ENCODE measurements at regions of chr11 and their contacts with region 1.

Region 1: GRCh38 chr11:12288212-12288930 is 89.0 kb upstream of the PARVA start:
- DNase-seq: peak; percentile 87
- H3K4me3 ChIP-seq: no peak overlapping the region
- H3K27ac ChIP-seq: peak overlapping the region; percentile 97
- H3K4me1 ChIP-seq: peaks cover 44% of the 10 kb centered on the region
- H3K27me3 ChIP-seq: no peaks in the 10 kb centered on the region
- CTCF ChIP-seq: peak; percentile 96 to 97
- POLR2A ChIP-seq: no peak

Region 2: DNA sequence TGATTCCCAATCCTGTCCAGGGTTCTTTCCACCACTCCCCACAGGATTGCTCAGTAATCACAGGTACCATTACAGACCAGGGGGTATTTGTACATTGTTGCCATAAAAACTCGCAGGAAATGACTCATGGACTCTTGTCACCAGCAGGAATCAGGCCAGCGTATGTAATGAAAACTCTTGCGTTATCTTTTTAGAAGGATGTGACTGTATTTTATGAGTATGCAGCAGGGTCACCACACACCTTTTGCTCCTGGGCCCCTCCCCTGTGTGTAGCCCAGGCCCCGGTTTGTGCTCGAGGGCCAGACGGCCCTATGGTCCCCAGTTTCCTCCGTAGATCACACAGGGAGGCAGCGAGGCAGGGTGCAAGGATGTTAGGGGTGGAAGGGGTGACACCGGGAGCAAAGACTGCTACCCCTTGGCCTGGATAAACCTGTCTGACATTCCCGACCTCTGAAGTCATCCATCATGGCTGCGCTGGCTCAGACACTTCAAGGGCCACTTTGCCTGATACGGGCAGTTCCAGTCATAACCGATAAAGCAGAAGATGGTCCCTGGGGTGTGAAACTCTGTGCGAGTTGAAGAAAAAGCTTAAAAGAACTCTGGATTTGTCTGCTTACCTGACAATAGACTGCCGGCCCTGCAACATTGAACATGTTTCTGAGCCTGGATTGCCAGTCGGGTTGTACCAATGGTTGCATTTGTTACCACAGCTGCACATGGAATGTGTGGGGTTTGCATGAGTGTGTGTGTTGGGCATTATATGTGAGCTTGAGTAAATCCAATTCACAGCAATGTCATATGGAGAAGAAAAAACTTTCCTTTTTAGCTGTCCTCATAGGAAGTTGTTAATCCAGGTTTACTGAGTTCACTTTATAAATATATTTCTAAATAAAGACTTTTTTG is 121.0 kb before region 1 on chr11:
- CTCF ChIA-PET with region 1: interaction called, 3 read pairs
- POLR2A ChIA-PET with region 1: no interaction called
- dilution Hi-C with region 1: no loop called
- intact Hi-C with region 1: loop called (anchors 2 kb)
- DNase-seq: peak; percentile 92
- H3K4me3 ChIP-seq: no peak overlapping the region
- H3K27ac ChIP-seq: peak overlapping the region; percentile 95
- H3K4me1 ChIP-seq: peaks cover 59% of the 10 kb centered on the region
- H3K27me3 ChIP-seq: no peaks in the 10 kb centered on the region
- CTCF ChIP-seq: no peak
- POLR2A ChIP-seq: peak; percentile 78

Region 3: DNA sequence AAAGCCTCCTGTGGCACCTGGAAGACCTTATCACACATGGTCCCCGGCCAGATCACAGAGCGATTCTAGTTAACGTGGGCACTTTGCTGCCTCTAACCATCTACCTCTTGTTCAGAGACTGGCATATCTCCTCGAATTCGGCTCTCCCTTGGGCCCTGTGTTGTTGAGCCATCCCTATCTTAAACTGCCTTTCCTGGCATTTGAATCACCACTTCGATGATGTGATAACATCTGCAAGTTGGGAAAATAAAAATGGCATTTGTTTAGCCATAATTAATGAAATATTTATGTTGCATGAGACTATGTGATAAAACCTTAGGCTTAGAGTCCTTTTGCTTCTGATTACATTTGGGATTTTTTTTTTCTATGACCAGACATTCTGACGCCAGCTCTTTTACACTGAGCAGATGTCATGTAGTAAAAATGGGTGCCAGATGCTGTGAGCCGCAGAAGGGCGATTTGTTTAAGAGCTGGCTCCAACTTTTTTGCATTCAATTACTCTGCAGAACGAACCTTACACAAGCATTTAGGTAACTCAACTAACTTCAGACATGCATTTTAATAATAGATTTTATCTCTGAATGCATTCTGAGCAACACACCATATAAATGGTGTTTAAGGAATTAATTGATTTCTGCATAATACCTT is 30.5 kb after region 1 on chr11:
- CTCF ChIA-PET with region 1: interaction called, 11 read pairs
- POLR2A ChIA-PET with region 1: no interaction called
- dilution Hi-C with region 1: no loop called
- intact Hi-C with region 1: no loop called
- DNase-seq: no peak
- H3K4me3 ChIP-seq: no peak overlapping the region
- H3K27ac ChIP-seq: no peak overlapping the region
- H3K4me1 ChIP-seq: no peaks in the 10 kb centered on the region
- H3K27me3 ChIP-seq: no peaks in the 10 kb centered on the region
- CTCF ChIP-seq: no peak
- POLR2A ChIP-seq: no peak

Region 4: DNA sequence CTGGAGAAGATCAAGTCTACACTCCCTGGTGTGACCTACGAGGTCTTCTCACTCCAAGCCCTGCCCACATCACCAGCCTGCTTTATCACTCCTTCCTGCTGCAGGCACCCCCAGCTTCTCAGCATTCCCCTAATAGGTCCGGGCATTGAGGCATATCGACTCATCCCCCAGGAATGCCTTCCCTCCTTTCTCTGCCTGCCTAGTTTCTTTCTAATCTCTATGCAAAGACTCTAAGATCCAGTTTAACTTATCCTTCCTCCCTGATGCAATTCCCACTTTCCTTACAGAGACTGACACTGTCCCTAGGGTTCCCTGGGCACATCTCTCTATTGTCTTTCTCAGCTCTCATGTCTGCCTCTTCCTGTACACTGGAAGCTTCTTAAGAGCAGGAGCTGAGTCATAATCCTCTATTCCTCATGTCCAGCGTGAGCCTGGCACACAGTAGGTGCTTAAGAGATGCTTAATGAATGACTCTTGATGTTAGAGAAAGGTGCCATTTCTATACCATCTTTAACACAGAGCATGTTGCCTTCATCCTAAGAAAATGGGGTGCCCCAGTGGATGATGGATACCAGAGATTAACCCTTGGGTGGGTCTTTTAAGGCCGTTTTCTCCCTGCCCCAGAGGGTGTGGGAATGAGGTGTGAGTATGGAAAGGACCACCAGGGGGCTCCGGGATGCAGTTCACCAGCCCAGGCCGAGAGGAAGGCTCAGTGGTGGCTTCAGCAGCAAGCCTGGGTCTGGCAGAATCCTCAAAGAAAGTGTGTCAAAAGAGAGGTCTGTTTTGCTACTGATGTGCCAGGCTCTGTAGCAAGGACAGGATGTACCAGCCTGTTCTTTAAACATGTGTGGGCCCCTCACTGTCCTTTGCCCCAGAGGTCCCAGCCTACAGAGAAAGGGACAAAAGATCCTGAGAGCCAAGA is 123.7 kb after region 1 on chr11:
- CTCF ChIA-PET with region 1: interaction called, 11 read pairs
- POLR2A ChIA-PET with region 1: no interaction called
- dilution Hi-C with region 1: no loop called
- intact Hi-C with region 1: loop called (anchors 1 kb)
- DNase-seq: peak; percentile 82
- H3K4me3 ChIP-seq: no peak overlapping the region
- H3K27ac ChIP-seq: peak overlapping the region; percentile 85
- H3K4me1 ChIP-seq: peaks cover 17% of the 10 kb centered on the region
- H3K27me3 ChIP-seq: no peaks in the 10 kb centered on the region
- CTCF ChIP-seq: peak; percentile 88 to 90
- POLR2A ChIP-seq: peak; percentile 19

Region 5: DNA sequence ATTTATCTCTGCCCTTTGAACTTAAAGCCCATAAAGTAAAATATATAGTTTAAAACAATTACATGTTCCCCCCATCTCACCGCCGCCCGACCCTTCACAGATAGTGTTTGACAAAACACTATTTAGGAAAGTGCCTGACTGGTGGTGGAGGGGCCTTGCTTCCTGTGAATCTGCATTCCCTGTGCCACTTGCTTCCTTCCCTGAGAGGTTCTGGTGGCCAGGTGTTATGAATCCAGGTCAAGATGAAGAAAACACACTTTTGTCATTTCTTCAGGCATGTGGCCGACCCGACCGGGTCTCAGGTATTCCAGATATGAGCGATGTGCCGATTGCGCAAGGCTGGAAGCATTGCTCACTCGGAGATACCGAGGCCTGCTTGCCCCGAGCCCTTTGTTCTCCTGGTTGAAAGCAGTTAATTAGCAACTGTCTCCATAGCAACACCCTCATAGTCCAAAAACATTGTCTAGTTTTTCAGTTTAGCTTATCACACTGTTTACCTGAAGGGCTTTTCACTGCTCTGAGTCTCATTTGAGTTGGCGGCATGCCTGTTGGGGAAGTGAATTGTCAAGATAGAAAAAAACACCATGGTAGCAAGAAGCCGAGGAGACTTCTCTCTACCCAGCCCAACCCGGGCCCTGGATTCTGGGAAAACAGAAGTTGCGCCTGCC is 514.2 kb after region 1 on chr11:
- CTCF ChIA-PET with region 1: no interaction called
- POLR2A ChIA-PET with region 1: no interaction called
- dilution Hi-C with region 1: no loop called
- intact Hi-C with region 1: loop called (anchors 5 kb)
- DNase-seq: peak; percentile 98
- H3K4me3 ChIP-seq: no peak overlapping the region
- H3K27ac ChIP-seq: peak overlapping the region; percentile 72
- H3K4me1 ChIP-seq: peaks cover 33% of the 10 kb centered on the region
- H3K27me3 ChIP-seq: no peaks in the 10 kb centered on the region
- CTCF ChIP-seq: no peak
- POLR2A ChIP-seq: no peak

Region 6: GRCh38 chr11:12893787-12894672 is 605.7 kb after region 1 on chr11:
- CTCF ChIA-PET with region 1: interaction called, 73 read pairs
- POLR2A ChIA-PET with region 1: no interaction called
- dilution Hi-C with region 1: no loop called
- intact Hi-C with region 1: loop called (anchors 1 kb)
- DNase-seq: peak; percentile 69
- H3K4me3 ChIP-seq: no peak overlapping the region
- H3K27ac ChIP-seq: no peak overlapping the region
- H3K4me1 ChIP-seq: no peaks in the 10 kb centered on the region
- H3K27me3 ChIP-seq: no peaks in the 10 kb centered on the region
- CTCF ChIP-seq: peak; percentile 72 to 96
- POLR2A ChIP-seq: no peak

Measured in endothelial cell of umbilical vein (primary cell).